Heart left ventricle (tissue), 16 donors: ENCODE measurements at regions of chr6 and their contacts with region 1.

Region 1: DNA sequence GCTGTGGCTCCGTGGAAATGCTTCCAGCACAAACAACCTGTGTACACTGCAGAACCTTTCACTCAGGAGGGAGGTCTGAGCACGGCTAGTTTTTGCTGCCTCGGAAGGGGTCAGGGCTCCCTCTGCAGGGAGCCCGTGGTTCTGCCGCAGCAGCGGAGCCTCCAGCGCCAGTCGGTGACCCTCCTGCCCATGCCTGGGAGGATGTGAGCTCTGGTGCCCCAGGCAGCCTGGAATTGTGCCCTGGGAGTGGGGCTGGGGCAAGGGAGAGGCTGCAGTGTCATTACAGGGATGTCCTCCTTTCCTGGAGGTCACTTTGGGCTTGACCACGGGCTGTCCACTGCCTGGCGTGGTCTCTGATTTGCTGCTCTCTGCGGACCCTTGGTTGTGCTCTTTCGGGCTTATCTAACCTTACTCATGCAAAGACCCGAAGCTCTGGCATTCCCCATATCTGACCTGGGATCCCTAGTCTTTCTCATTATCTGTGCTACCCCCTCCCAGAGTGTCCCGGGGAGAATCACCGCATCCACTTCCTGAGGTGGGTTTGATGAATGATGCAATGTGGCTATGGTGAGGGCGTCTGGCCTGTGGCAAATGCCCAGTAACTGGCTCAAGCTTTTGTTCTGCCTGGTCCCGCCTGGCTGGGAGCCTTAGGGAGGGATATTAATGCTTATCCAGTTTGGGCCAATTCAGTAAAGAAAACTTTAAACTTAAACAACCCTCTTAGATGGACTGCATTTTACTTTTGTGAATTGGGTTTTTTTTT is 59.6 kb upstream of the TAGAP start:
- DNase-seq: peak; percentile 50 to 85 (median 62)
- ATAC-seq: peak; percentile 67 to 94 (median 90)
- H3K4me3 ChIP-seq: no peak overlapping the region
- H3K27ac ChIP-seq: no peak overlapping the region
- H3K4me1 ChIP-seq: peaks cover 0 to 47% (median 5%) of the 10 kb centered on the region in 12 donors
- H3K27me3 ChIP-seq: peaks cover 0 to 9% (median 0%) of the 10 kb centered on the region in 9 donors
- CTCF ChIP-seq: peak; percentile 63 to 83 (median 76)
- POLR2A ChIP-seq: no peak

Region 2: DNA sequence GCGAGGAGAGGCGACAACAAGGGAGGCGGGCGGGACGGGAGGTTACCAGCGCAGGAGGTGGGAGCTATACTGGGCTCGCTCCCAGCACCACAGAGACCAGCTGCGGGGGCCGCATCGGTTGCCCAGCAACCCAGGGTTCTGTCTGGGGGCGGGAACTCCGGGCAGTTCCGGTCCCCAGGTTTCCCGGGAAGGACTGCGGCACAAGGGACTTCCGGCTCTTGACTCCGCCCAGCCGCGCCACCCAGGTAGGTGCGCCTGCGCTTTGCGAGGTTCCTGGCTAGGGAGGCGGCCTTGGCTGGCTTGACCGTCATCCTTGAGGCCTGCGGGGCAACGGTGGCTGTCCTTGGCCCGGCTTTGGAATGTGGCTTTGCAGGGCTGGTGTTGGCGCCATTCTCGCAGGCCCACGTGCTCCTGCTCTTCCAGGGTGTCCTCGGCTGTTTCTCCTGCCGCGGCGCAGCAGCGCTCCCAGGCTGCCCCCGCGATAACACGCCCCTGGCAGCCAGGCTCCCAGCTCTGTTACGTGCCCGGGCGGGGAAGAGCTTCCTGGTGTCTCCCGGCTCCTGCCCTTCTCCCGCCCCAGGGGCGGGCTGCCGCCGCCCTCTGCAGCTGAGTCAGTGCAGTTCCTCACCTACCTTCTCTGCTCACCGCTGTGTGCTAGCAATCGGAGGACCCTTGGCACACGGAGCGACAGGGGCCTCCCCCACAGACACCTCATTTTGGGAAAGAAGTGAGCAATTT is 104.5 kb before region 1 on chr6 and contains the start of gene RSPH3:
- intact Hi-C with region 1: loop called in 3 of 10 experiments (anchors 5 to 10 kb)
- DNase-seq: peak; percentile 91 to 96 (median 95)
- ATAC-seq: peak; percentile 95 to 97 (median 96)
- H3K4me3 ChIP-seq: peak within 1 kb of the TSS; percentile 36 to 85 (median 72)
- H3K27ac ChIP-seq: peak within 1 kb of the TSS; percentile 29 to 90 (median 87)
- H3K4me1 ChIP-seq: peaks cover 0 to 27% (median 11%) of the 10 kb centered on the region in 12 donors
- H3K27me3 ChIP-seq: no peaks in the 10 kb centered on the region
- CTCF ChIP-seq: peak in 4 of 12 donors; percentile 26 to 46 (median 40)
- POLR2A ChIP-seq: peak in 1 of 2 donors; percentile 69
- total RNA-seq, gene RSPH3: 6.2 to 13.2 (median 9.6) TPM

Region 3: GRCh38 chr6:159042003-159042825 is 62.1 kb before region 1 on chr6:
- intact Hi-C with region 1: loop called in 9 of 10 experiments (anchors 1 to 10 kb)
- DNase-seq: peak in 4 of 5 donors; percentile 44 to 68 (median 53)
- ATAC-seq: peak; percentile 58 to 82 (median 78)
- H3K4me3 ChIP-seq: peak overlapping the region in 6 of 12 donors; percentile 29 to 70 (median 42)
- H3K27ac ChIP-seq: peak overlapping the region in 7 of 12 donors; percentile 9 to 90 (median 36)
- H3K4me1 ChIP-seq: peaks cover 0 to 70% (median 8%) of the 10 kb centered on the region in 12 donors
- H3K27me3 ChIP-seq: peaks cover 0 to 5% (median 0%) of the 10 kb centered on the region in 9 donors
- CTCF ChIP-seq: peak; percentile 81 to 98 (median 91)
- POLR2A ChIP-seq: no peak